ENCODE measurements at regions of chr5 and their contacts with region 1.

Region 1: GRCh38 chr5:55146543-55147151 is 13.3 kb upstream of the GPX8 start:
- DNase-seq: peak; percentile 91
- ATAC-seq: peak; percentile 82
- H3K4me3 Mint-ChIP-seq: peak overlapping the region; percentile 34
- H3K27ac Mint-ChIP-seq: peak overlapping the region; percentile 67
- H3K4me1 Mint-ChIP-seq: peaks cover 43% of the 10 kb centered on the region
- H3K27me3 Mint-ChIP-seq: peaks cover 21% of the 10 kb centered on the region

Region 2: GRCh38 chr5:54930736-54931135 is 215.9 kb before region 1 on chr5:
- CTCF ChIA-PET with region 1: interaction called, 10 read pairs
- POLR2A ChIA-PET with region 1: no interaction called
- DNase-seq: no peak
- ATAC-seq: no peak
- H3K4me3 Mint-ChIP-seq: no peak overlapping the region
- H3K27ac Mint-ChIP-seq: no peak overlapping the region
- H3K4me1 Mint-ChIP-seq: peaks cover 17% of the 10 kb centered on the region
- H3K27me3 Mint-ChIP-seq: peaks cover 25% of the 10 kb centered on the region

Region 3: DNA sequence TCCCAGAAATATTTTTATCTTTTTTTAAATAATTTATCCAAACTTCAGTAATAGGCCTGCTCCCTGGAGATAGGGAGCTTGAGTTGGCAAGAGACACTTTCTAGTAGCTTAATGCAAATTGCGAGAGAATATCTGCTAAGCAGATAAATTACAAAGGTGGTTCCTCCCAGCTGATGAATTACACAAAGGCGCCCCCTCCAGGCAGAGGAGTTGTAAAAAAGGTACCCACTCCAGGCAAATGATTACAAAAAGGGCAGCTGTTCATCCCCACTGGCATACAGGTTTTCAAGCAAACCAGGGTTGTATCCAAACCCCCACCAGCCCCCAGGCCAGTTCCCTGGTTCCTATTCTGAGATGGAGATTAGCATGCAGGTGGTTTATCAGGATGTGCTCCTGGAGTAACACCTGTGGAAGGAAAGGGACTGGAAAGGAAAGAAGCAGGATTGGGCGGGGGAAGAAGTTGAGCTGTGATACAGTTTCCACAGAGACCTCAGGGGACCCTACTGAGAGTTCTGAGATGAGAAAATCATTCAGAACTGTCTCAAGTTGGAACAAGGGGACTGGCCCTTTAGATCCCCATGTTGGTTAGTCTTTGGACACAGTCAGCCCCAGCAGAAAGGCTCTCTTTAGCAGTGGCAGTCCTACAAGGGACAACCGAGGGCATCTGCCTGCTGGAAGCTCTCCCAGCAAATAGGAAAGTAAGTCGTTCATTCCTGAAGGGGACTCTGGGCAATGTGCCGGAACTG is 186.8 kb before region 1 on chr5:
- CTCF ChIA-PET with region 1: interaction called, 10 read pairs
- POLR2A ChIA-PET with region 1: no interaction called
- DNase-seq: peak; percentile 46
- ATAC-seq: no peak
- H3K4me3 Mint-ChIP-seq: no peak overlapping the region
- H3K27ac Mint-ChIP-seq: no peak overlapping the region
- H3K4me1 Mint-ChIP-seq: peaks cover 12% of the 10 kb centered on the region
- H3K27me3 Mint-ChIP-seq: peaks cover 13% of the 10 kb centered on the region

Region 4: DNA sequence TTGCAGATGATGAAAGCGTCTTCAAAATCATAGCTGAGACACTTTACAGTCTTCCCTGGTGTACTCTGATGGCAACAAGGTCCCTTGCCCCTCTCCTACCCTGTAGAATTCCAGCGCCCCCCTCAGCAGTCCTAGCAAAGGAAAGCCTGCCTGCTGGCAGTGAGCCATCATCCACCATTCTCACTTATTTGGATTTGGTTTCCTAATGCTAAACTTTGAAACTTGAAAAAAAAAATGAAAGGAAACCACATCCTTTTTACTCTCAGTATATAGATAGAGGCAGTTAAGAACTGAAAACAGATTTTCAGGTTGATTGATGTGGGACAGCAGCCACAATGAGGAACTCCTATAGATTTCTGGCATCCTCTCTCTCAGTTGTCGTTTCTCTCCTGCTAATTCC is 44.3 kb before region 1 on chr5 and contains the start of gene GZMA:
- CTCF ChIA-PET with region 1: interaction called, 64 read pairs
- POLR2A ChIA-PET with region 1: interaction called, 4 read pairs
- DNase-seq: peak; percentile 68
- ATAC-seq: peak; percentile 78
- H3K4me3 Mint-ChIP-seq: peak within 1 kb of the TSS; percentile 84
- H3K27ac Mint-ChIP-seq: peak within 1 kb of the TSS; percentile 94
- H3K4me1 Mint-ChIP-seq: peaks cover 86% of the 10 kb centered on the region
- H3K27me3 Mint-ChIP-seq: peaks cover 2% of the 10 kb centered on the region
- total RNA-seq, gene GZMA: 356 to 365 TPM

Region 5: DNA sequence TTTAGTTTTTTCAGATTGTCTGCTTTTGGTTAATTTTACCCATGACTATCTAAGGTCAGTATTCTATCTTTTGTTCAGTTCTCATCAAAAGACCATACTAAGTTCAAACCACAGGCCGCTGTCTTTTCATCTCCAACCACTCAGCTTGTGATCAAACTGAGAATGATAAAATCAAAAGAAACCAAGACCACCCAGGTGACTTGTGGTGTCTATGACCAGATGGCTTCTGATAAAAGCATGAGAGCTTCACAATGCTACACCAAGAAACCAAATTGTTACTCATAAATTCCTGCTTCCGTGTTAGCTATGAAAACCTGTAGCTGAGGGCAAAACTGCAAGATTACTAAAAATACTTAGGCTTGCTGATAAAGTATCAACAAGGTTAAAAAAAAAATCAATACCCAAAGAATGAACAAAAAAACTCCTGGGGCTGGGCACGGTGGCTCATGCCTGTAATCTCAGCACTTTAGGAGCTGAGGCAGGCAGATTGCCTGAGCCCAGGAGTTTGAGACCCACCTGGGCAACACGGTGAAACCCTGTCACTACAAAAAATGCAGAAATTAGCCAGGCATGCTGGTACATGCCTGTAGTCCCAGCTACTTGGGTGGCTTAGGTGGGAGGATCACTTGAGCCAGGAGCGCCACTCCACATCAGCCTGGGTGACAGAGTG is 12.5 kb before region 1 on chr5:
- CTCF ChIA-PET with region 1: interaction called, 24 read pairs
- POLR2A ChIA-PET with region 1: no interaction called
- DNase-seq: peak; percentile 85
- ATAC-seq: peak; percentile 93
- H3K4me3 Mint-ChIP-seq: peak overlapping the region; percentile 56
- H3K27ac Mint-ChIP-seq: peak overlapping the region; percentile 84
- H3K4me1 Mint-ChIP-seq: peaks cover 49% of the 10 kb centered on the region
- H3K27me3 Mint-ChIP-seq: peaks cover 13% of the 10 kb centered on the region